ENCODE measurements at regions of chr3 and their contacts with region 1.

Region 1: DNA sequence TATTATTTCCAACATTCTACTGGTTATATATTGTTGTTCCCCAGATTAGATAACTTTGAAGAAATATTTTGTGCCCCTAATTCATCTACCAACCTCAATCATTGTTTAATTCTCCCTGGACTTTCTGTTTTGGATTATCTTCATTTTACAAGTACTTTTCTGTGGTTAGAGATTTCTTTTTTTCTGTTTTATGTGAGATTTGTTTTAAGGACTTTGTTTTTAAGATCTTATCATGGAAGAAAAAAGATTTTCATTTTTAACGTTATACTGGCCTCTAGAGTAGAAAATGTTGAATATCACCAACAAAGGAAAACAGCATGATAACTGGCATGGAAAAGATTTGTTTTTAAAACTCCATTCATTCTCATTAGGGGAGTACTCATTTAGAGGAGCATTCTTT is 210.9 kb upstream of the KCNMB2 start:
- DNase-seq: peak; percentile 27
- H3K4me3 Mint-ChIP-seq: no peak overlapping the region
- H3K27ac Mint-ChIP-seq: no peak overlapping the region
- H3K4me1 Mint-ChIP-seq: peaks cover 5% of the 10 kb centered on the region
- H3K27me3 Mint-ChIP-seq: no peaks in the 10 kb centered on the region
- CTCF ChIP-seq: peak; percentile 37

Region 2: GRCh38 chr3:177050501-177051237 is 1274.7 kb before region 1 on chr3:
- CTCF ChIA-PET with region 1: interaction called, 3 read pairs
- POLR2A ChIA-PET with region 1: no interaction called
- intact Hi-C with region 1: loop called (anchors 1 kb)
- DNase-seq: peak; percentile 53
- H3K4me3 Mint-ChIP-seq: no peak overlapping the region
- H3K27ac Mint-ChIP-seq: no peak overlapping the region
- H3K4me1 Mint-ChIP-seq: peaks cover 5% of the 10 kb centered on the region
- H3K27me3 Mint-ChIP-seq: no peaks in the 10 kb centered on the region
- CTCF ChIP-seq: peak; percentile 52

Region 3: DNA sequence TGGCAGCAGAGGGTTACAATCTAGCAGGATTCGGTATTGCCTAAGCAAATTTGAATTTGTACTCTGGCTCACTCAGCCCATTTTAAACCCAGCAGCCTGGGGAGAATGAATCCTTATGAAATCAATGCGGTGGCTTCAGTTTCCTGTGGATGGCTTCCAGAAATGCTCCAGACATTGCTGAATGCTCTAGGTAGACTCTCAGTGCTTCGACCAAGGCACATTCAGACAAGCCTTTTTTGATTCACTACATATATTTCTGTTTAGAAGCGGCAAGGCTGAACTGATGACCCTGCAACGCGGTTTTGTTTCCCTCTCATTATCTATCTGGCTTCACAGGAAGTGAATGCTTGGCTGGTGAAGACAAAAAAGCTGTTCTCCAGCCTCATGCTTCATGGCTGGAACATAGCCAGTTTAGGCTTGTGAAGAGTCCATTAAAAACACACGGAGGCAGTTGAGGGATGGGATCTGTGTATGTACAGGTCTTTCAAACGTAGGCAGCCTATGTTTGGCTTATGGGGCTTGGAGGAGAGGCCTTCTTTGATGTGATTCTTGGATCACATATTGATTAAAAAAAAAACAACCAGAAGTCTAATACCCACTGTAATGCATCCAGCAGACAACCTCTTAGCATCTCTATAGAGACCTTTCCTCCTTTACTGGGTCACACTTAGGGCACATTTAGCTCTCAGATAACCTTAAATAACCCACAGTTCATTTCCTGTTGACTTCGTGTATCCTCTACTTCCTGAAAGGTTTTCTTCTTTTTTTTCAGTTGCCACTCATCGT is 727.8 kb before region 1 on chr3:
- CTCF ChIA-PET with region 1: no interaction called
- POLR2A ChIA-PET with region 1: no interaction called
- intact Hi-C with region 1: loop called (anchors 10 kb)
- DNase-seq: peak; percentile 94
- H3K4me3 Mint-ChIP-seq: no peak overlapping the region
- H3K27ac Mint-ChIP-seq: peak overlapping the region; percentile 93
- H3K4me1 Mint-ChIP-seq: peaks cover 61% of the 10 kb centered on the region
- H3K27me3 Mint-ChIP-seq: no peaks in the 10 kb centered on the region
- CTCF ChIP-seq: no peak

Region 4: GRCh38 chr3:178084938-178085816 is 240.2 kb before region 1 on chr3:
- CTCF ChIA-PET with region 1: interaction called, 3 read pairs
- POLR2A ChIA-PET with region 1: no interaction called
- intact Hi-C with region 1: loop called (anchors 10 kb)
- DNase-seq: no peak
- H3K4me3 Mint-ChIP-seq: no peak overlapping the region
- H3K27ac Mint-ChIP-seq: no peak overlapping the region
- H3K4me1 Mint-ChIP-seq: peaks cover 10% of the 10 kb centered on the region
- H3K27me3 Mint-ChIP-seq: no peaks in the 10 kb centered on the region
- CTCF ChIP-seq: no peak

Region 5: GRCh38 chr3:178275793-178276192 is 49.5 kb before region 1 on chr3:
- CTCF ChIA-PET with region 1: no interaction called
- POLR2A ChIA-PET with region 1: interaction called, 20 read pairs
- intact Hi-C with region 1: no loop called
- DNase-seq: no peak
- H3K4me3 Mint-ChIP-seq: no peak overlapping the region
- H3K27ac Mint-ChIP-seq: peak overlapping the region; percentile 71
- H3K4me1 Mint-ChIP-seq: peaks cover 22% of the 10 kb centered on the region
- H3K27me3 Mint-ChIP-seq: no peaks in the 10 kb centered on the region
- CTCF ChIP-seq: no peak

Region 6: DNA sequence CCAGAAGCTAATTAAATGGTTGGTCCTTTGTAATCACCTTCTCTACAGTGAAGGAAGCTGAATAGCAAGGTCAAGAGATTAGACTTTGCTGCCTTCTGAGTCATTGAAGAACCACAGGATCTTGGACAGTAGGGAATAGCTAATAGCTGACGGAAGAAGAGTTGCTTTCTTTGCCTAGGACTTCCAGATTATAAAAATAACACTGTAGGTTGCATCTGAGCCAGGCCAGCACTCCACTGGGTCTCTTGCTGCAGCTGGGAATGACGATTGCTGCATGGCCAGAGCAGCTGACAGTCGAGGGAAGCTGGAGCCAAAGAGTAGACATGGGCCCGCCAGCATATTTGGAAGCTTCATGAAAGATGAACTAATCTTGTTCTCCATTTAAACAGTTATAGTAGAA is 129.4 kb after region 1 on chr3:
- CTCF ChIA-PET with region 1: no interaction called
- POLR2A ChIA-PET with region 1: no interaction called
- intact Hi-C with region 1: no loop called
- DNase-seq: no peak
- H3K4me3 Mint-ChIP-seq: no peak overlapping the region
- H3K27ac Mint-ChIP-seq: no peak overlapping the region
- H3K4me1 Mint-ChIP-seq: no peaks in the 10 kb centered on the region
- H3K27me3 Mint-ChIP-seq: no peaks in the 10 kb centered on the region
- CTCF ChIP-seq: no peak

Measured in MCF 10A (cell line).